ENCODE measurements at regions of chr18 and their contacts with region 1.

Region 1: DNA sequence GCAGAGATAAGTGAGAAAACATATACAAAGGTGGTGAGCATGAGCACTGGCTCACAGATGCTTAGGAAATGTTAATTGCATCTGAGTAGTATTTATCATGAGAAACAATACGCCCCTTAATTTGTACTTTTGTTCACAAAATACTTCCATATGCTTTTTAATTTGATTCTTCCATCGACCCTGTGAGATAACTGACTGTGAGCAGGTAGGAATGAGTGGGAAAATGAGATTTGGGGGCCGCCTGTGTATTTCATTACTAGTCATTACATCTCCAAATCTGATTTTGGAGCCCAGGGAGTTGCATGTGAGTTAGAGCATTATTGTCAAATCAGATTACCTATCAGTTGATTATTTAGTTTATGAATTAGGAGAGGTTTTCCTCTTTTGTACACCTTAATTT is 36.7 kb upstream of the NPC1 start:
- DNase-seq: no peak
- H3K4me3 ChIP-seq: no peak overlapping the region
- H3K27ac ChIP-seq: no peak overlapping the region
- H3K4me1 ChIP-seq: peaks cover 0 to 6% (median 2%) of the 10 kb centered on the region in 4 experiments; a peak in 3 of 7 replicates
- H3K27me3 ChIP-seq: peaks cover 5 to 25% (median 17%) of the 10 kb centered on the region in 4 experiments
- CTCF ChIP-seq: no peak
- EP300 ChIP-seq: no peak
- POLR2A ChIP-seq: no peak
- RAD21 ChIP-seq: no peak

Region 2: GRCh38 chr18:23635283-23636070 is 12.4 kb after region 1 on chr18:
- CTCF ChIA-PET with region 1: interaction called, 13 read pairs
- POLR2A ChIA-PET with region 1: no interaction called
- DNase-seq: no peak
- H3K4me3 ChIP-seq: no peak overlapping the region
- H3K27ac ChIP-seq: no peak overlapping the region
- H3K4me1 ChIP-seq: peaks cover 2 to 7% (median 3%) of the 10 kb centered on the region in 4 experiments; a peak in 4 of 7 replicates
- H3K27me3 ChIP-seq: no peaks in the 10 kb centered on the region
- CTCF ChIP-seq: no peak
- EP300 ChIP-seq: no peak
- POLR2A ChIP-seq: no peak
- RAD21 ChIP-seq: no peak

Region 3: GRCh38 chr18:23668731-23669130 is 45.7 kb after region 1 on chr18:
- CTCF ChIA-PET with region 1: no interaction called
- POLR2A ChIA-PET with region 1: no interaction called
- DNase-seq: no peak
- H3K4me3 ChIP-seq: no peak overlapping the region
- H3K27ac ChIP-seq: no peak overlapping the region
- H3K4me1 ChIP-seq: peaks cover 0 to 2% (median under 1%) of the 10 kb centered on the region in 4 experiments; a peak in 2 of 7 replicates
- H3K27me3 ChIP-seq: no peaks in the 10 kb centered on the region
- CTCF ChIP-seq: no peak
- EP300 ChIP-seq: no peak
- POLR2A ChIP-seq: no peak
- RAD21 ChIP-seq: no peak

Region 4: DNA sequence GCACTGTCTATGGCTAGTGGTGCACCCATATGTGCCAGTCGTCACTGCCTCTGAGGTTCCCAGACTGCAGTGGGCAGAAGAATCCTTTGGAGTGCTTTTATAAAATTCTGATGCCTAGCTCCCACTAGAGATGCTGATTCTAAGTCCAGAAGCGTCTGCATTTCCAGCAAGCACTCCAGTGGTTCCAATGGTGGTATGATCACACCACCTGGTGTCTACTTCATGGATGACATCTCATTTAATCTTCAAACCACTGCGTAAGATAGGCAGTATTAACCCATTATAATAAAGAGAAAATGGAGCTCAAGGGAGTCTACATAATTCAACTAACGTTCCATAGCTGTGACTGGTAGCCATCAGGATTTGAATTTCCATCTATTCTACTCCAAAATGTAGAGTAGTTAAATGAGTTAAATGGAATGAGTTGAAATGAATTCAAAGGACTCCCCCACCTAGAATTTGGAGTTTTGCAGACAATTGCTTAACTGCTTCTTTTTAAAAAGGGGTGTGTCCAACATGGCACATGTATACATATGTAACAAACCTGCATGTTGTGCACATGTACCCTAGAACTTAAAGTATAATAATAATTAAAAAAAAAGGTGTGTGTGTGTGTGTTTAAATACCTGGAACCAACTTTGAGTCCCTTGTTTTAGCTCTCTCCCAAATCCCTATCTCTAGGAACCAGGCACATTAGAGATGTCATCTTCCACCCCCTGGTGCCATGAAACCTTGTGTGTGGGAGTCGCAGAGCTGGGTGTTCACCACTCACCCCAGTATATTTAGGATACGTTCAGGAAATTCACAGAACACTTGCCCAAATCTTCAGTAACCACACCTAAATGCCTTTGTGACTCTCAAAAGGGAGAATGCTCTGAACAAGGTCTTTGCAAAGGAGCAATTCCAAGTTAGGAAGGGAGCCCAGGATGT is 80.3 kb after region 1 on chr18:
- CTCF ChIA-PET with region 1: interaction called, 23 read pairs
- POLR2A ChIA-PET with region 1: interaction called, 6 read pairs
- DNase-seq: no peak
- H3K4me3 ChIP-seq: no peak overlapping the region
- H3K27ac ChIP-seq: no peak overlapping the region
- H3K4me1 ChIP-seq: no peaks in the 10 kb centered on the region
- H3K27me3 ChIP-seq: no peaks in the 10 kb centered on the region
- CTCF ChIP-seq: peak in 2 of 3 experiments; percentile 53 to 68; a peak in 3 of 4 replicates
- EP300 ChIP-seq: no peak
- POLR2A ChIP-seq: no peak
- RAD21 ChIP-seq: peak; percentile 88 to 90

Region 5: DNA sequence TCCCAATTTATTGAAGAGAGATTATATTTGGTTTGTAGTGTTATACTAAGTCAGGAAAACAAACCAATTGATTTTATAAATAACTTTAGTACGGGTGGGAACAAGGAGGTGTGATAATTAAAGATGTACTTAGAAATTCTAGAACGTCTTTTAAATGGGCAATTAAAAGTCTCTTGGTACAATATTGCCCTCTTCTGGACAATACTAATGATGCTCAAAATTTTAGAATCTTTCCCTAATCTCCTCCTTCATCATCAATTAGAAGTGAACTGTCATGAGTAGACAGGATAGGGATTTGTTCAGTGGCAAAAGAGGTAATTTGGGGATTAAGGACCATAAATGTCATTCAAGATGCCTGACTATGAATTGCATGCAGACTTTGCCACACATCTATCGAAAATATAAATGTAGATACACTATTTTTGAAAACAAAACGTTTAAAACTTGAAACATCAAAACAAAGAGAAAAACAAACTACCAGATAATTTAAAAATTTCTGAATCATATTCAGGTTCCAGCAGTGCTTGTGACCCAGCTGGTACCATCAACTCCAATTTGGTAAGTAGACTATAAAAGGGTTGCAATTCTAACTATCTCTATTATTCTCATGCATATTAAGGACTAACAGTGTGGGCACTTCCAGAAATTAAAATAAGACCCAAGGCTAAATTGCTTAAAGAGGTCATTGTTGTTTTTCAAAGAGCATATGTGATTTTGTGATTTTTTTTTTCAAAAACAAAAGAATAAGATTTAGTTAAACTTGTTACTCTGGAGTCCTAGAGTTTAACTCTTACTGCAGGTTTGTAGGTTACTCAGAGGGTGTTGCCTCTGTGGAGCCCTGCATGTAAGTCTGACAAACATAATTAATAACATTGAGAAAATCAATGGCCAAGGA is 189.8 kb after region 1 on chr18:
- CTCF ChIA-PET with region 1: interaction called, 19 read pairs
- POLR2A ChIA-PET with region 1: no interaction called
- DNase-seq: no peak
- H3K4me3 ChIP-seq: no peak overlapping the region
- H3K27ac ChIP-seq: no peak overlapping the region
- H3K4me1 ChIP-seq: peaks cover 0 to 4% (median 2%) of the 10 kb centered on the region in 4 experiments; a peak in 4 of 7 replicates
- H3K27me3 ChIP-seq: no peaks in the 10 kb centered on the region
- CTCF ChIP-seq: peak in 2 of 3 experiments; percentile 28 to 34; a peak in 2 of 4 replicates
- EP300 ChIP-seq: no peak
- POLR2A ChIP-seq: no peak
- RAD21 ChIP-seq: peak; percentile 39 to 48; a peak in 3 of 4 replicates